CD8-positive, alpha-beta T cell (primary cell): ENCODE measurements at regions of chr1 and their contacts with region 1.

Region 1: GRCh38 chr1:43414634-43415223 is 25.0 kb downstream of the SZT2 start:
- DNase-seq: peak; percentile 37 to 75 (median 70)
- ATAC-seq: peak; percentile 99
- H3K4me3 ChIP-seq: no peak overlapping the region
- H3K4me3 Mint-ChIP-seq: no peak overlapping the region
- H3K27ac ChIP-seq: no peak overlapping the region
- H3K27ac Mint-ChIP-seq: peak overlapping the region; percentile 6
- H3K4me1 ChIP-seq: no peaks in the 10 kb centered on the region
- H3K4me1 Mint-ChIP-seq: no peaks in the 10 kb centered on the region
- H3K27me3 ChIP-seq: no peaks in the 10 kb centered on the region
- H3K27me3 Mint-ChIP-seq: no peaks in the 10 kb centered on the region
- CTCF ChIP-seq: peak; percentile 60

Region 2: DNA sequence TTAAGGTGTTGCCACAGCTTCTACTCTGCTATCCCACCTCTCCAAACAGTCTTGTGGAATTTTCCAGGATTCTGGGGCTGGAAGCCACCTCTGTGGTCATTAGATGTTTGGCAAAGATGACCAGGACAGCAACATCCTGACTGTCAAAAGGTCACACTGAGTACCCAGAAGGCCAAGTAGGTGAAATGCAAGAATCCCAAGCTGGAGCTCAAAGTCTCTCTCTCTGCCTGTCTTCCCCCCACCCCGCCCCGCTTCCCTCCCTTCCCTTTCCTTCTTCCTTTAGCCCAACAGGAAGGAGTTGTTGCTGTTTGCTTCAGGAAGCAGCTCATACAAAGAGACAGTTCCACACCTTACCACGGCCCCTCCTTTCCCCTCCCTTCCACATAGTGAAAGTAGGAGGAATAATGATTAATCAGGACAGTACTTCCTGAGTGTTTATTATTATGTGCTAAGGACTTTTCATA is 380.5 kb before region 1 on chr1:
- CTCF ChIA-PET with region 1: no interaction called
- POLR2A ChIA-PET with region 1: no interaction called
- intact Hi-C with region 1: no loop called
- DNase-seq: no peak
- ATAC-seq: no peak
- H3K4me3 ChIP-seq: no peak overlapping the region
- H3K4me3 Mint-ChIP-seq: peak overlapping the region; percentile 33
- H3K27ac ChIP-seq: peak overlapping the region in 1 of 2 experiments; percentile 77
- H3K27ac Mint-ChIP-seq: peak overlapping the region; percentile 86
- H3K4me1 ChIP-seq: peaks cover 20% of the 10 kb centered on the region
- H3K4me1 Mint-ChIP-seq: peaks cover 17% of the 10 kb centered on the region
- H3K27me3 ChIP-seq: no peaks in the 10 kb centered on the region
- H3K27me3 Mint-ChIP-seq: no peaks in the 10 kb centered on the region
- CTCF ChIP-seq: no peak

Region 3: GRCh38 chr1:43238085-43238484 is 176.6 kb before region 1 on chr1:
- CTCF ChIA-PET with region 1: interaction called, 231 read pairs
- POLR2A ChIA-PET with region 1: no interaction called
- intact Hi-C with region 1: loop called in 1 of 2 experiments (anchors 1 kb)
- DNase-seq: peak in 3 of 9 experiments; percentile 23 to 47 (median 35)
- ATAC-seq: no peak
- H3K4me3 ChIP-seq: no peak overlapping the region
- H3K4me3 Mint-ChIP-seq: no peak overlapping the region
- H3K27ac ChIP-seq: no peak overlapping the region
- H3K27ac Mint-ChIP-seq: no peak overlapping the region
- H3K4me1 ChIP-seq: no peaks in the 10 kb centered on the region
- H3K4me1 Mint-ChIP-seq: no peaks in the 10 kb centered on the region
- H3K27me3 ChIP-seq: no peaks in the 10 kb centered on the region
- H3K27me3 Mint-ChIP-seq: peaks cover 4% of the 10 kb centered on the region
- CTCF ChIP-seq: no peak

Region 4: DNA sequence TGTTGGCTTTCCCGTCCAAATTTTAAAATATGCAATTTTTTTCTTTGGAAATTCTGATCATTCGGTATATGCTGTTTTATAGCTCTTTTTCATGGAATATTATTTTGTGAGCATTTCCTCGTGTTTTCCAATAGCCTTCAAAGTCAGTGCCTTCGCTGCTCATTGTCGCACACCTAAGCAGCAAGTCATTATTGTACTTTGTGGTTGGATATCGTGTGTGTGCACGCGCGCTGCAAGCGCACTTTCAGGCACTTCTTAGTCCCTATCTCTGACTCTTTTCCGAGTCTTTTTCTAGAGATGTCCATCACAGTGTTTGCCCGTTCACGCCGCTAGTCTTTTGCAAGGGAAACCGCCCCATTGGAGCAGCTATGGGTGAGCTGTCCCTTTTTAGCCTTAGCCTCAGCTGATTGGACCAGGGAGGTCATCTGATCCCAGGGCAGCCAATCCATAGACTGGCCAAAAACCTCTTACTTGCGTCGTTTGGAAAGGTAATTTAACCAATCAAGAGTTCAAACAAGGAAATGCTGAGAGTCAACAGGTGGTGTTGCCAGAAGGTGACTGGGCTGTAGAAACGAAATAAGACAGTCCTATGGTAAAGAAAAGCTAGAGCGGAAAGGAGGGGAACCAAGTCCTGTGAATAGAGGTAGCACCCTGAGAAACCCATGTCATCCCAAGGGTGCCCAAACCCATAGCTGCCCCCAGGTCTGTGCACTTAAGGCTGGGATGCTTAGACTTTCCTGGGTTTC is 39.7 kb after region 1 on chr1:
- CTCF ChIA-PET with region 1: no interaction called
- POLR2A ChIA-PET with region 1: no interaction called
- intact Hi-C with region 1: no loop called
- DNase-seq: peak; percentile 22 to 73 (median 51)
- ATAC-seq: peak; percentile 71
- H3K4me3 ChIP-seq: peak overlapping the region; percentile 46 to 61
- H3K4me3 Mint-ChIP-seq: peak overlapping the region; percentile 90
- H3K27ac ChIP-seq: peak overlapping the region in 1 of 2 experiments; percentile 34
- H3K27ac Mint-ChIP-seq: peak overlapping the region; percentile 88
- H3K4me1 ChIP-seq: peaks cover 8% of the 10 kb centered on the region
- H3K4me1 Mint-ChIP-seq: peaks cover 23% of the 10 kb centered on the region
- H3K27me3 ChIP-seq: peaks cover 0 to 2% of the 10 kb centered on the region in 2 experiments
- H3K27me3 Mint-ChIP-seq: peaks cover 31% of the 10 kb centered on the region
- CTCF ChIP-seq: no peak